GM12878 (cell line): ENCODE measurements at regions of chr3 and their contacts with region 1.

Region 1: GRCh38 chr3:196280689-196281440 is 6.7 kb downstream of the PCYT1A start:
- DNase-seq: no peak
- ATAC-seq: peak; percentile 89
- H3K4me3 ChIP-seq: peak overlapping the region; percentile 55
- H3K27ac ChIP-seq: peak overlapping the region; percentile 71
- H3K4me1 ChIP-seq: peaks cover 29% of the 10 kb centered on the region
- H3K27me3 ChIP-seq: no peaks in the 10 kb centered on the region
- CTCF ChIP-seq: no peak
- EP300 ChIP-seq: no peak
- POLR2A ChIP-seq: no peak
- RAD21 ChIP-seq: no peak

Region 2: GRCh38 chr3:196024968-196025367 is 255.9 kb before region 1 on chr3:
- CTCF ChIA-PET with region 1: no interaction called
- POLR2A ChIA-PET with region 1: no interaction called
- RAD21 ChIA-PET with region 1: no interaction called
- SMC1A ChIA-PET with region 1: no interaction called
- in situ Hi-C with region 1: no loop called
- intact Hi-C with region 1: no loop called
- DNase-seq: no peak
- ATAC-seq: no peak
- H3K4me3 ChIP-seq: no peak overlapping the region
- H3K27ac ChIP-seq: no peak overlapping the region
- H3K4me1 ChIP-seq: no peaks in the 10 kb centered on the region
- H3K27me3 ChIP-seq: no peaks in the 10 kb centered on the region; a peak in 1 of 4 replicates
- CTCF ChIP-seq: no peak
- EP300 ChIP-seq: no peak
- POLR2A ChIP-seq: no peak
- RAD21 ChIP-seq: no peak

Region 3: DNA sequence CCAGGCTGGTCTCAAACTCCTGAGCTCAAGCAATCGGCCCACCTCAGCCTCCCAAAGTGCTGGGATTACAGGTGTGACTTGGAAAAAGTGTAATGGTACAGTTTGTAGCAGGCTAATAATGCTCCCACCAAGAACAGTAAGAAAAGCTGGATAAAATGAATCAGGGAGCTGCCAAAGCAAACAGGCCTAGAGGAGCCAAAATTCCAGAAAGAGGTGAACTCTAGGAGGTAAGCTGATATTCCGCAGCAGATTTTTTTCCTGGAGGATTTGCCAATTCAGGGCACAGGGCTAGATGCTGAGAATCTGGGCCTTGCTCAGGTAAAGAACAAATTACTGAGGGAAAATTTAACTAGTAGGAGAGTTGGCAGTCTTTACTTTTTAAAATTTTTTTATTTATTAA is 17.7 kb after region 1 on chr3:
- CTCF ChIA-PET with region 1: no interaction called
- POLR2A ChIA-PET with region 1: no interaction called
- RAD21 ChIA-PET with region 1: interaction called, 5 read pairs
- SMC1A ChIA-PET with region 1: interaction called, 12 read pairs
- in situ Hi-C with region 1: no loop called
- intact Hi-C with region 1: no loop called
- DNase-seq: no peak
- ATAC-seq: no peak
- H3K4me3 ChIP-seq: no peak overlapping the region
- H3K27ac ChIP-seq: no peak overlapping the region
- H3K4me1 ChIP-seq: peaks cover 7% of the 10 kb centered on the region
- H3K27me3 ChIP-seq: no peaks in the 10 kb centered on the region
- CTCF ChIP-seq: no peak
- EP300 ChIP-seq: no peak
- POLR2A ChIP-seq: no peak
- RAD21 ChIP-seq: no peak

Region 4: DNA sequence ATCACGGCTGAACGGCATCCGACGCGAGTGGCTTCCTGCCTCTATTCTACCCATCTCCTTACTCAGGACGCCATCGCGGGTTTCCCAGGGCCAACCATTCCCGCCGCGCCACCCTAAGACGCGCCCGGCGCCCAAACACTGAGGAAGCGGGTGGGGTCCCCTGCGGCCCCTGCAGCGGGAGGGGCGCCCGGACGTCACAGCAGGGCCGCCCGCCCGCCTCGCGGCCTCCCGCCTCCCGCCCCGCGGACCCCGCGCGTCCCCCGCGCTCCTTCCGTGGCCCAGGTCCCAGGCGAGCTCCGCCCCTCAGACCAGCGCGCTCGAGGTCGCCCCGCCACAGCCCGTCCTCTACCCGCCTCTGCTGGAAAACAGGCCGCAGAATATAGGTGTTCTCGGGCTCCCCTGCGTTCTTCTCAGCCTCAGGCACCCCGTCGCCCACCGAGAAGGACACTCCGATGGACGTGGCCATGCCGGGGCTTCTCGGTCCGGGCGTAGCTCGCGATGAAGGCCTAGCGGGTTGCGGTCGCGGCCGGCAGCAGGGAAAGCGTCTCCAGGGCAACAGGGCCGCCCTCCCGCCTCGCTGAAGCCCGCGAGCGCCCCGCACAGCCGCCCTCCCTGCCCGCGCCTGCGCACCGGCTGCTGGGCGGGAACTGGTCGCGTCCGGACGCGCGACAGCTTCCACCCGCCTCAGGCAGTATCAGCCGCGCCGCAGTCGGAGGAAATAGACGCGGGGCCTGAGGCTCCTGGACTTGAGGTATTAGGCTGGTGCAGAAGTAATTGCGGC is 37.0 kb after region 1 on chr3 and contains the start of gene DYNLT2B:
- CTCF ChIA-PET with region 1: interaction called, 7 read pairs
- POLR2A ChIA-PET with region 1: interaction called, 3 read pairs
- RAD21 ChIA-PET with region 1: interaction called, 3 read pairs
- SMC1A ChIA-PET with region 1: interaction called, 10 read pairs
- in situ Hi-C with region 1: no loop called
- intact Hi-C with region 1: loop called (anchors 5 kb)
- DNase-seq: peak; percentile 67
- ATAC-seq: peak; percentile 97
- H3K4me3 ChIP-seq: peak within 1 kb of the TSS; percentile 97
- H3K27ac ChIP-seq: peak within 1 kb of the TSS; percentile 83
- H3K4me1 ChIP-seq: no peaks in the 10 kb centered on the region
- H3K27me3 ChIP-seq: no peaks in the 10 kb centered on the region
- CTCF ChIP-seq: peak in 1 of 3 experiments; percentile 45; a peak in 2 of 6 replicates
- EP300 ChIP-seq: no peak
- POLR2A ChIP-seq: peak; percentile 88
- RAD21 ChIP-seq: no peak
- polyA plus RNA-seq, gene DYNLT2B: 24.2 to 39.6 TPM